Mucosa of descending colon (tissue), 3 donors: ENCODE measurements at regions of chr18 and their contacts with region 1.

Region 1: GRCh38 chr18:63320046-63320689 is 599 bp upstream of the BCL2 start:
- DNase-seq: peak; percentile 87 to 91 (median 88)
- ATAC-seq: peak; percentile 73
- H3K4me3 ChIP-seq: peak overlapping the region; percentile 48
- H3K4me1 ChIP-seq: no peaks in the 10 kb centered on the region
- CTCF ChIP-seq: peak; percentile 5

Region 2: DNA sequence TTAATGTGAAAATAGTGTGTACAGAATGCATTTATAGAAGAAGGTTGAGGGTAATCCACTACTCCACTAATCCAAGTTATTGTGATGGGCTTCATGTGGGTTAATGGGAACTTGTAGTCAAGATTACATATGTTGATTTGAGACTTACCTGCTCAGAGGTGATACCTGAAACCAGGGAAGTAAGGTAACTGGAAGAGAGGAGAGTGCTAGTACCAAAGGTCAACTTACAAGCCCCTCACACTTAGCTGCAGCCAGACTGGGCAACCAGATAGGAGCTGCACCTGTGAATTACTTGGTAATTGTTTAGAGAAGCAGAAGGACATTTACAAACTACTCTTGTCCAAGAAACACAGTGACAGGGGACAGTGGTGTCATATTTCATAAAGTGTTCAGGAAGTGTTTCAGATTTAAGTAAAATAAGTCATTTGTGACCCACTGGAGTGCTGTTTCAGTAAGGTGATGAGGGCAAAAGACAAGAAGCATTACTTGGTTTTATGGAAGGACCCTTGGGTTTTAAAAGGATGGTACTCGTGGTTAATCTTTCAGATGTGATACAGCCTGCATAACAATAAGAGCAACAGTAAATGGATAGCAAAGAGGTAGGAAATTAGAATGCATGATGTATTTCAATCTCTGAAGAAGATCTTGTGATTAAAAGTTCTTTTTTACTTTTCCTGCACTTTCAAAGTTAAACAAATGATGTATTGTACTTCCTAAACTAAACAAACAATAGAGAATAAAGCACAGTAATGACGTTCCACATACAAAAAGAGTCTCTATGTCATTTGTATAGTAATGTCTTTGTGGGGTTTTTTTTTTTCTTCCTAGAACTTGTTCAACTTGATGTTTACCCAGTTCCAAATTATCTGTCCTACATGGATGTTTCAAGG is 415.5 kb before region 1 on chr18:
- intact Hi-C with region 1: no loop called
- DNase-seq: no peak
- ATAC-seq: no peak
- H3K4me3 ChIP-seq: no peak overlapping the region
- H3K4me1 ChIP-seq: no peaks in the 10 kb centered on the region
- CTCF ChIP-seq: no peak

Region 3: GRCh38 chr18:63016270-63016669 is 303.9 kb before region 1 on chr18:
- intact Hi-C with region 1: loop called (anchors 5 to 10 kb)
- DNase-seq: peak in 1 of 3 donors; percentile 71
- ATAC-seq: peak; percentile 70
- H3K4me3 ChIP-seq: no peak overlapping the region
- H3K4me1 ChIP-seq: no peaks in the 10 kb centered on the region
- CTCF ChIP-seq: peak; percentile 48

Region 4: DNA sequence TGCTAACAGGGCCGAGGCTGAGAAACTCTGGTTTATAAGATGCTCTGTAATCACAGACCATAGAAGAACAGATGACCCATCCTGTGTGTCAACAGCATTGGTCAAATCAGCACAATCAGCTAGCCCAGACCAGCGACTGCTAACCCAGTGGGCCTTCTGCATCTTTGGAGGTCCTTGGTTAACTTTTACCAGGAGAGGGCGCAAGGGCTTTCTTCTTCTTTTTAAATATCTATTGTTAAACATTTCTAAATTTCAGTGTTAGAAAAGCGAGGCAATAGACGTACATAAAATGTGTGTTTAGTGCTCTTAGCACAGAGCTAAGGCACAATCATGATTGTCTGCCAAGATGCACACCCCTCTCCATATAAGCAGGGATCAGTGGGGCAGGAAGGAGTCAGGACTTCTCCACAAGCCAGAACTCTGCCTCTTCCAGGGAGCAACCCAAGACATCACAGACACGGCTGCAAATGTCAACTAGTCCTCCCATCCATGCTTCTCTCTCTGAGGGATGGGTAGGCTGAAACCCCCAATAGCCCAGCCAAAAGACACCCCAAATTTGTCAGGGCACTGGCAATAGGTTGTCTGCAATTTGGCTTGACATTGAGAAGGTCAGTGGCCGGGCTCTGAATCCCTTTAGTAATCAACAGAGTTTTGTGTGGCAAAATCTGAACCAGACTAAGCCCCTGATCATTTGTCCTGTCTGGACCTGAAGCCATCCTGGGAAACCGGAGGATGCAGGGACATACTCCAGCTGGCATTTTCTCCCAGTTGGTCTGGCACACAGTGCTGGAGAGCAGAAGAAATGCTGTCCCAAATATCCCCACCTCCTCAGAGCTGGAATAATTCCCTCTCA is 188.8 kb before region 1 on chr18:
- intact Hi-C with region 1: loop called (anchors 5 kb)
- DNase-seq: peak in 1 of 3 donors; percentile 91
- ATAC-seq: peak; percentile 59
- H3K4me3 ChIP-seq: no peak overlapping the region
- H3K4me1 ChIP-seq: peaks cover 19% of the 10 kb centered on the region
- CTCF ChIP-seq: peak; percentile 31

Region 5: DNA sequence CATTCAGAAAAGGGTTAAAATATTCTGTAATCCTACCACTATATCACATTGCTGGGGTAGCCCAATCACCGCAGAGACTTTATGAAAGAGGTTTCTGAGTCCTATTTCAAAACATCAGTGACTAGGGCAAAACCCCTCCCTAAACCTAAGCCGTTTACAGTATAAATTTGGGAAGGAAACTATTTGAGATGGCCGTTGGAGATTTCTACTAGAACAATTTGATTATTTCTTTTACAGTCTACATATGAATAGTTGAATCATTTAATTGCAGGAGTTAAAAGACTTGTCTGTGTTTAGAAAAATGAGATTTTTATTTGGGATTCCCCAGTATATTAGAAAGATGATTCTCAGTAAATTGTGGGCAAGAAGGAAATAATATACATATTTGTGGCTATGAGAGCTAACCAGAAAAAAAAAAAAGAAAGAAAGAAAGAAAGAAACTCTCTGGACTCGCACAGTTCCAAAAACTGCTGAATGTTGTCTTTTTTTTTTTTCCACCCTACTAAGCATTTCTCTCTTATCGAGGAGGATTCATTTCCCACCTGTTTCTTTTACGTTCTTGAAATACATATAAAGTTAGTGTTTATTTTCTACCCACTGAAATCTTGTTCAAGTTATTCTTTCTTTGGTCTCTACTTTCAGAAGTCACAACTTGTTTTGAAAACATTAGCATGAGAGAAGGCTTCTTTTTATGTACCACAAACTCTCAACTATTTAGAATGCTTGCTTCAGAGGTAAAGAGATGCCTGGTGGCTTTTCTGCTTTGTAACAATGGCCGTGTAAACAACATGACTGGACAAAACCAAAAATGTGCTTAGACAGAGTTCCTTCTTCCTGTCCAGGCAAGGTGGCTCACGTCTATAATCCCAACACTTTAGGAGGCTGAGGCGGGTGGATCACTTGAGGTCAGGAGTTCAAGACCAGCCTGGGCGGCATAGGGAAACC is 66.5 kb before region 1 on chr18:
- intact Hi-C with region 1: loop called (anchors 10 kb)
- DNase-seq: no peak
- ATAC-seq: peak; percentile 51
- H3K4me3 ChIP-seq: no peak overlapping the region
- H3K4me1 ChIP-seq: peaks cover 29% of the 10 kb centered on the region
- CTCF ChIP-seq: no peak

Region 6: GRCh38 chr18:63518178-63519012 is 198.2 kb after region 1 on chr18:
- intact Hi-C with region 1: no loop called
- DNase-seq: peak in 1 of 3 donors; percentile 77
- ATAC-seq: peak; percentile 87
- H3K4me3 ChIP-seq: no peak overlapping the region
- H3K4me1 ChIP-seq: no peaks in the 10 kb centered on the region
- CTCF ChIP-seq: peak; percentile 32